Sigmoid colon (tissue), 7 donors: ENCODE measurements at regions of chr2 and their contacts with region 1.

Region 1: GRCh38 chr2:100818606-100819369 is 1.2 kb upstream of the NPAS2 start:
- DNase-seq: peak; percentile 85
- H3K4me3 ChIP-seq: peak overlapping the region; percentile 51 to 90 (median 76)
- H3K27ac ChIP-seq: peak overlapping the region; percentile 88 to 98 (median 94)
- H3K4me1 ChIP-seq: peaks cover 0 to 51% (median 32%) of the 10 kb centered on the region in 4 donors
- H3K27me3 ChIP-seq: no peaks in the 10 kb centered on the region
- CTCF ChIP-seq: no peak
- EP300 ChIP-seq: peak in 1 of 4 donors; percentile 11
- POLR2A ChIP-seq: peak in 1 of 2 donors; percentile 31

Region 2: GRCh38 chr2:100610381-100610831 is 208.4 kb before region 1 on chr2:
- intact Hi-C with region 1: loop called (anchors 5 kb)
- DNase-seq: peak; percentile 80
- H3K4me3 ChIP-seq: no peak overlapping the region
- H3K27ac ChIP-seq: no peak overlapping the region
- H3K4me1 ChIP-seq: no peaks in the 10 kb centered on the region
- H3K27me3 ChIP-seq: no peaks in the 10 kb centered on the region
- CTCF ChIP-seq: peak; percentile 37 to 60 (median 43)
- EP300 ChIP-seq: no peak
- POLR2A ChIP-seq: no peak

Region 3: DNA sequence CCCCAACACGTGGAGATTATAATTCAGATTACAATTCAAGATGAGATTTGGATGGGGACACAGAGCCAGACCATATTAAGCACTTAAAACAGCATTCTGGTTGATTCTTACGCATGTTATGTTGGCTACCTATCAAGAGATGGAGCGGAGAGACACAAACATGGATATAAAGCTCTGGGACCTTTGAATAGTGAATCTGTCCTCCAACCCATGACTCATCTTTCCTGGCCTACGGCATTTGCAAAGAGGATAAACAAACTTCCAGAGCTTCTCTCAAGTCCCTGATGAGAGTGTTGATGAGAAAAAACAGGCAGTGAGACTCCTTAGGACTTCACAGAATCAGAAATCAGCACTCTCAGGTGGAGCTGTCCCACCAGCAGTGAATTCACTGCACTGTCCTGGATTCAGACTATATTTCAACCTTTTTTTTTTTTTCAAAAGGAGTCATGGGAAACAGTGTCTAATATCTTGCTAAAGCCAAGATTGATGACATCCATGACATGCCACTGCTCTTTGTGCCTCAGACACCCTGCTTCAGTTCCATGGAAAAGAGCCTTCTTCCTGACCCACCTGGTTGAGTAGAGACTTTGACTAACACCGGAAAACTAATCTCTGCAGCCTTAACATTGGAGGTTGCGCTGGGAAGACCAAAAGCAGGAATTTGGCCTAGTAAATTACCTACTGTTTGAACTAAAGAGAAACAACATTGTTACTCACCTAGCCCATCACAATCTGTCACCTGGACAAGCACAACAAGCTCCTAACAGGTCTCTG is 61.0 kb before region 1 on chr2:
- intact Hi-C with region 1: loop called (anchors 2 kb)
- DNase-seq: peak; percentile 82
- H3K4me3 ChIP-seq: no peak overlapping the region
- H3K27ac ChIP-seq: peak overlapping the region; percentile 61 to 81 (median 74)
- H3K4me1 ChIP-seq: peaks cover 0 to 37% (median 23%) of the 10 kb centered on the region in 4 donors
- H3K27me3 ChIP-seq: no peaks in the 10 kb centered on the region
- CTCF ChIP-seq: no peak
- EP300 ChIP-seq: peak in 3 of 4 donors; percentile 15 to 78 (median 57)
- POLR2A ChIP-seq: no peak

Region 4: GRCh38 chr2:100875516-100876230 is 56.9 kb after region 1 on chr2:
- intact Hi-C with region 1: loop called (anchors 5 kb)
- DNase-seq: no peak
- H3K4me3 ChIP-seq: no peak overlapping the region
- H3K27ac ChIP-seq: no peak overlapping the region
- H3K4me1 ChIP-seq: peaks cover 0 to 16% (median 11%) of the 10 kb centered on the region in 4 donors
- H3K27me3 ChIP-seq: no peaks in the 10 kb centered on the region
- CTCF ChIP-seq: no peak
- EP300 ChIP-seq: no peak
- POLR2A ChIP-seq: no peak

Region 5: DNA sequence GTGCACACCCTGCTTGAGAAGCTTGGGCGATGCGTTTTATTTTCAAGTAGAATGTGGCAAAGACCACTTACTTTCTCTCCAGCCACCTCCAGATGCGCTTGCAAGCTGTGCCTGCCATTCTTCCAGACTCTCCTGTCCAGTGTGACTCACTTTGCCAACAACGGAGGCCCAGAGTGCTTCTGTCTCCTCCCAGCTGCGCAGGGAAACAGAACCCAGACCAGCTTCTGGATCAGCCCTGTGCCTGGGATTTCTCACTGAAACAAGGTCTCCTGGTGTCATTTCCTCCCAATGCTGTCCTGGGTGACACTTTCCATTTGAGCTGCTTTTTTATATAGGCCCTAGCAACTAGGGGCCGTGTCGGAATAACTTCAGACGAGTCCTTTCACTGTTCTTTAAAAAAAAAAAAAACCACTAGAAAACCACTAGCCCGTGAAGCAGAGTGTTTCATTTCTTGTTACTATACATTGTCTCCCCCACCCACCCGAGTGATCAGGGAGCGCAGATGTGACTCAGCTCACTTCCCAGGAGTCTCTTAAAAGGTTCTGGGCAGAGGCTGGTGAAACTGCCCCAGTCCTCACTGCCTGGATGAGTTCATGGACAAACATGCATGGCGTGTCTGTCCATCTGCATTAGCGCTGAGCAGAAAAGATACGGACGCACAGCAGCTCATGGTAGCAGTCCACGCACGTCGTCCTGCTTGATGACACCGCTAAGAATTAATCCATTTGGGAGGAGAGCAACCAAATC is 158.0 kb after region 1 on chr2:
- intact Hi-C with region 1: loop called (anchors 5 kb)
- DNase-seq: peak; percentile 83
- H3K4me3 ChIP-seq: no peak overlapping the region
- H3K27ac ChIP-seq: peak overlapping the region in 3 of 4 donors; percentile 70 to 83 (median 73)
- H3K4me1 ChIP-seq: peaks cover 0 to 33% (median 29%) of the 10 kb centered on the region in 4 donors
- H3K27me3 ChIP-seq: no peaks in the 10 kb centered on the region
- CTCF ChIP-seq: no peak
- EP300 ChIP-seq: peak in 2 of 4 donors; percentile 36 to 50
- POLR2A ChIP-seq: no peak

Region 6: DNA sequence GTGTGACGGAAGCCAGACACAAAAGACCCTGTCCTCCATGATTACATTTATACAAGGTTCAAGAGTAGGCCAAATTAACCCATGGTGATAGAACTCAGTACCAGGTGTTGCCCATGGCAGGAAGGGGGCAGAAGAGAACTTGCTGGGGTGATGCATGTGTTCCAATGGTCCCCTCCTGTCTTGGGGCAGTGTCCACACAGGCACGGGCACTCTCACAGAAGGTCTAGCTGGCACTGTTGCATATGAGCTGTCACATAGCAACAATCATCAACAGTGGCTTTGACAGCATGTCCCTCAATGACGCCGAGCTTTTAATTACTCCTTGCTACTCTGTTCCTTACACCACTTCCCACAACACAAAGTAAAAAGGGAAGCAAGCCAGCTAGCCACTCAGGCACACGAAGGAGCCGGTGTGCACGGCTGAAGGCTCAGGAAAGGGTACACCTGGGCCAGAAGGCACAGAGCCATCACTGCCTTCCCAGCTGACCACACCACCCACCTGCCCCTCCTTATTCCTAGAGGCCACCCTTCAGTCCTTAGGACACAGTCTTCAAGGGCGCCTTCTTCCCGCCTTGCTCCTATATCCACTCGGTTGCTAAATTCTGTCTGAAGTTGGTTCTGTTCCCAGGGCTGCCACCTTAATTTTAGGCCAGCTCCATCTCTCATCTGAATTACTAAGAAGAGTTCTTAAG is 212.2 kb after region 1 on chr2:
- intact Hi-C with region 1: no loop called
- DNase-seq: no peak
- H3K4me3 ChIP-seq: no peak overlapping the region
- H3K27ac ChIP-seq: no peak overlapping the region
- H3K4me1 ChIP-seq: peaks cover 0 to 11% (median 0%) of the 10 kb centered on the region in 4 donors
- H3K27me3 ChIP-seq: no peaks in the 10 kb centered on the region
- CTCF ChIP-seq: no peak
- EP300 ChIP-seq: no peak
- POLR2A ChIP-seq: no peak